Activated T-helper 1 cell treated with anti-CD3 and anti-CD28 coated beads, Interleukin-12 subunit alpha, Interleukin-12 subunit beta, Interleukin-2, Interleukin-4 antibody, amounts not matched to agents 30 ng/mL and 10 ng/mL and 1 ng/mL, durations not matched to agents 14 hours and 24 hours and 36 hours (primary cell): ENCODE measurements at regions of chr14 and their contacts with region 1.

Region 1: DNA sequence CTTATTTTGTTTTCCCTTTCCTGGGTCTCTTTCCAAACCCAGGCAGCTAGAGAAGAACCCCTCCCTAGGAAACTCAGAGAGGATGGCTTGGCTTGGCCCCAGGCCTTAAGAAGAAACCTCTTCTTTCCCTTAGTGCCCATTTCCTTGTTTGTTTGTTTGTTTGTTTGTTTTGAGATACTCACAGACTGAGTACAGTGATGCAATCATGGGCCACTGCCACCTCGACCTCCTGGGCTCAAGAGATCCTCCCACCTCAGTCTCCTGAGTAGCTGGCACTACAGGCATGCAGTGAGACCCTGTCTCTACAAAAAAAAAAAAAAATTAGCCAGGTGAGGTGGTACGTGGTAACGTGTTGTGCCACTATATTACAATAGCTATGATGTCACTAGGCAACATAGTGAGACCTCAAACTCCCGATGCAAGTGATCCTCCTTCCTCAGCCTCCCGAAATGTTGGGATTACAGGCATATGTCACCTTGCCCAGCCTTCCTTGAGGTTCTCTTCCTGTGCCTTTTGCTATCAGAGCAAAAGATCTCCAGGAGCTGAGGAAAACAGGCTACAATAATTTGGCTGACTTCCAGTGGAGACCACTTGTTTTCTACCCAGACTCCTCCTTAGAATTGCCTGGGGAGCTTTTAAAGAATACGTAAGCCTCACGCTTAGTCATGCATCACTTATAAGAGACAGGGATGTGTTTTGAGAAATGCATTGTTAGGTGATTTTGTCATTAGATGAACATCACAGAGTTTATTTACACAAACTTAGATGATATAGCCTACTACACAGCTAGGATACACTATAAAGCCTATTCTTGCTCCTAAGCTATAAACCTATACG is 34.5 kb upstream of the LGALS3 start:
- DNase-seq: no peak
- H3K4me3 Mint-ChIP-seq: no peak overlapping the region
- H3K27ac Mint-ChIP-seq: no peak overlapping the region
- H3K4me1 Mint-ChIP-seq: peaks cover 36% of the 10 kb centered on the region
- H3K27me3 Mint-ChIP-seq: peaks cover under 1% of the 10 kb centered on the region

Region 2: GRCh38 chr14:54475187-54475899 is 619.2 kb before region 1 on chr14:
- intact Hi-C with region 1: no loop called
- DNase-seq: no peak
- H3K4me3 Mint-ChIP-seq: no peak overlapping the region
- H3K27ac Mint-ChIP-seq: no peak overlapping the region
- H3K4me1 Mint-ChIP-seq: peaks cover 11% of the 10 kb centered on the region
- H3K27me3 Mint-ChIP-seq: no peaks in the 10 kb centered on the region

Region 3: GRCh38 chr14:55129428-55130195 is 35.1 kb after region 1 on chr14:
- intact Hi-C with region 1: loop called (anchors 1 kb)
- DNase-seq: peak; percentile 32
- H3K4me3 Mint-ChIP-seq: peak overlapping the region; percentile 79
- H3K27ac Mint-ChIP-seq: peak overlapping the region; percentile 70
- H3K4me1 Mint-ChIP-seq: peaks cover 26% of the 10 kb centered on the region
- H3K27me3 Mint-ChIP-seq: peaks cover 32% of the 10 kb centered on the region

Region 4: DNA sequence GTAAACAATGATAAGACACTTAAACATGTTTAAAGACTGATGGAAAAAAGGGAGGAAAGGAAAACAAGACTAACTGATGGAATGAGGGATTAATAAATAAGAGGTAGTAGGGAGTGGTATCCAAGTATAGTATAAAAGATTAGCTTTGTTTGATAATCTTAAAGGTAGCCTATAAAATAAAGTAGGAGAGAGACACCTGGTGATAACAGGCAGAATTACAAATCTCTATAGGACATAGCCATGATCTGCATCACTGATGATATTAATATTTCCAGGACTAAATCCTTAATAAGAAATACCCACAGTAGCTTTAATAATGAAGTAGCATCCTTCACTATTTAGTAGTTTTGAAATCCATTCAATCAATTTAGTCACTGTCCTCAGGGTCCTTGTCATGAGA is 66.5 kb after region 1 on chr14:
- intact Hi-C with region 1: loop called (anchors 1 kb)
- DNase-seq: no peak
- H3K4me3 Mint-ChIP-seq: no peak overlapping the region
- H3K27ac Mint-ChIP-seq: no peak overlapping the region
- H3K4me1 Mint-ChIP-seq: peaks cover 27% of the 10 kb centered on the region
- H3K27me3 Mint-ChIP-seq: no peaks in the 10 kb centered on the region